Naive thymus-derived CD8-positive, alpha-beta T cell (primary cell): ENCODE measurements at regions of chr4 and their contacts with region 1.

Region 1: GRCh38 chr4:25312496-25313200 is at the start of gene ZCCHC4:
- DNase-seq: peak; percentile 79 to 95 (median 92)
- ATAC-seq: peak; percentile 95 to 96
- H3K4me3 Mint-ChIP-seq: peak within 1 kb of the TSS; percentile 96 to 100 (median 99)
- H3K27ac Mint-ChIP-seq: peak within 1 kb of the TSS; percentile 91 to 99 (median 97)
- H3K4me1 Mint-ChIP-seq: peaks cover 4 to 42% (median 25%) of the 10 kb centered on the region in 4 donors
- H3K27me3 Mint-ChIP-seq: peaks cover 0 to 14% (median 3%) of the 10 kb centered on the region in 5 donors
- polyA plus RNA-seq, gene ZCCHC4: 5.9 to 10.4 (median 6.3) TPM

Region 2: GRCh38 chr4:25159884-25160713 is 152.5 kb before region 1 on chr4 and contains the start of gene SEPSECS:
- POLR2A ChIA-PET with region 1: interaction called, 10 read pairs
- DNase-seq: peak; percentile 87 to 96 (median 93)
- ATAC-seq: peak; percentile 81 to 83
- H3K4me3 Mint-ChIP-seq: peak within 1 kb of the TSS; percentile 86 to 97 (median 92)
- H3K27ac Mint-ChIP-seq: peak within 1 kb of the TSS; percentile 91 to 100 (median 98)
- H3K4me1 Mint-ChIP-seq: peaks cover 24 to 62% (median 52%) of the 10 kb centered on the region in 4 donors
- H3K27me3 Mint-ChIP-seq: peaks cover 0 to 4% (median 0%) of the 10 kb centered on the region in 5 donors
- polyA plus RNA-seq, gene SEPSECS: 1.7 to 2.3 (median 2.0) TPM

Region 3: DNA sequence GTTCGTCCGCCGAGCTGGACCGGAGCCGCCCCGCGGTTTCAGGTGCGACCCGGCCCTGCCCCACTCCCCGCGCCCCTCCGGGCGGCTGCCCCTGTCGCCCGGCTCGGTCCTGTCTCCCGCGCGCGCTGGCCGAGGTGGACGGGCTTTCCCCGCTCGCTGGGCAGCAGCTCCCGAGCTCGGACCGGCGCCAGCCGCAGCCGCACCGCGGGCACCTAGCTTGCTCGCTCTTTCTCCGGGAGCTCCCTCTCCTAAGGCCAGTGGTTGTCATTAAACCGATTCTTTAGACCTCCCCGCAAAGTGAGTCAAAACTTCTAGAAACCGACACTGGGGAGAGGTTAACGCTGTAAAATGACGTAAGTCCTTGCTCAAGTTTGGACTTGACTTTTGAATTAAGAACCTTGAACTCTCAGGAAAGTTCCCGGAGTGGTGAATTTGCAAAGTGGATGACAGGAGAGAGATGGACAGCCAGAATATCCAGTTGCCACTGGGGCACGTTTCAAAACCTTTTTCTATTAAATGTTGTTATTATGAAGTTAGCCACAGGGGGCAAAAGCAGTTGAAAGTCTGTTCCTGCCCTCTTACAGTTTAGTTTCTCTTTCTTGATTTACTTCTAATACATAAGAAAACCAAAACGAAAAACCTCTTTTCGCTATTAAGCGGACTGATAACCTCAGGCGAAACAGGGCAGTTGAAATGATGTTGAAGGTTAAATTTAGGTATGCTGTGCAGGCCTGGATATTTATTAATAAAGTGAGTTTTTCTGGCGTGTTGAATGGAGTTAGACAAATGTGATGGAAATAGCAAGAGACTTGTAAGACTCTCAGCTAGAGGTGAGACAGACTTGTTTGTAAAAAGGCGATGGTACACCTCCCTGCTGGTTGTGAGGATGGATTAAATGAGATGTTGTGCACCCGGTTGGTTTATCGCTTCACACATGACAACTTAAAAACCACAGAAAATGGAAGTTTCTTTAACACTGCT is 78.0 kb before region 1 on chr4:
- POLR2A ChIA-PET with region 1: interaction called, 28 read pairs
- DNase-seq: peak in 9 of 10 donors; percentile 15 to 75 (median 41)
- ATAC-seq: peak; percentile 39 to 54
- H3K4me3 Mint-ChIP-seq: peak overlapping the region; percentile 84 to 97 (median 92)
- H3K27ac Mint-ChIP-seq: peak overlapping the region; percentile 86 to 95 (median 93)
- H3K4me1 Mint-ChIP-seq: peaks cover 16 to 48% (median 40%) of the 10 kb centered on the region in 4 donors
- H3K27me3 Mint-ChIP-seq: no peaks in the 10 kb centered on the region

Region 4: GRCh38 chr4:25376754-25377571 is 64.3 kb after region 1 on chr4 and contains the start of gene ANAPC4:
- POLR2A ChIA-PET with region 1: interaction called, 11 read pairs
- DNase-seq: peak; percentile 86 to 99 (median 95)
- ATAC-seq: peak; percentile 90 to 93
- H3K4me3 Mint-ChIP-seq: peak within 1 kb of the TSS in 1 of 10 donors; percentile 77
- H3K27ac Mint-ChIP-seq: peak within 1 kb of the TSS in 9 of 10 donors; percentile 53 to 92 (median 83)
- H3K4me1 Mint-ChIP-seq: peaks cover 0 to 17% (median 7%) of the 10 kb centered on the region in 4 donors
- H3K27me3 Mint-ChIP-seq: no peaks in the 10 kb centered on the region
- polyA plus RNA-seq, gene ANAPC4: 16.3 to 19.1 (median 17.6) TPM